Heart right ventricle (tissue), 16 donors: ENCODE measurements at regions of chr1 and their contacts with region 1.

Region 1: GRCh38 chr1:232650845-232651244 is 20.9 kb upstream of the SIPA1L2 start:
- DNase-seq: no peak
- ATAC-seq: no peak
- H3K4me3 ChIP-seq: no peak overlapping the region
- H3K27ac ChIP-seq: no peak overlapping the region
- H3K4me1 ChIP-seq: peaks cover 0 to 7% (median 0%) of the 10 kb centered on the region in 9 donors
- H3K27me3 ChIP-seq: peaks cover 0 to 20% (median 0%) of the 10 kb centered on the region in 7 donors
- CTCF ChIP-seq: no peak

Region 2: GRCh38 chr1:233010146-233010545 is 359.3 kb after region 1 on chr1:
- intact Hi-C with region 1: loop called in 1 of 10 experiments (anchors 5 kb)
- DNase-seq: no peak
- ATAC-seq: no peak
- H3K4me3 ChIP-seq: no peak overlapping the region
- H3K27ac ChIP-seq: no peak overlapping the region
- H3K4me1 ChIP-seq: no peaks in the 10 kb centered on the region
- H3K27me3 ChIP-seq: no peaks in the 10 kb centered on the region
- CTCF ChIP-seq: no peak